Activated CD4-positive, alpha-beta T cell treated with anti-CD3 and anti-CD28 coated beads for 36 hours (primary cell): ENCODE measurements at regions of chr11 and their contacts with region 1.

Region 1: DNA sequence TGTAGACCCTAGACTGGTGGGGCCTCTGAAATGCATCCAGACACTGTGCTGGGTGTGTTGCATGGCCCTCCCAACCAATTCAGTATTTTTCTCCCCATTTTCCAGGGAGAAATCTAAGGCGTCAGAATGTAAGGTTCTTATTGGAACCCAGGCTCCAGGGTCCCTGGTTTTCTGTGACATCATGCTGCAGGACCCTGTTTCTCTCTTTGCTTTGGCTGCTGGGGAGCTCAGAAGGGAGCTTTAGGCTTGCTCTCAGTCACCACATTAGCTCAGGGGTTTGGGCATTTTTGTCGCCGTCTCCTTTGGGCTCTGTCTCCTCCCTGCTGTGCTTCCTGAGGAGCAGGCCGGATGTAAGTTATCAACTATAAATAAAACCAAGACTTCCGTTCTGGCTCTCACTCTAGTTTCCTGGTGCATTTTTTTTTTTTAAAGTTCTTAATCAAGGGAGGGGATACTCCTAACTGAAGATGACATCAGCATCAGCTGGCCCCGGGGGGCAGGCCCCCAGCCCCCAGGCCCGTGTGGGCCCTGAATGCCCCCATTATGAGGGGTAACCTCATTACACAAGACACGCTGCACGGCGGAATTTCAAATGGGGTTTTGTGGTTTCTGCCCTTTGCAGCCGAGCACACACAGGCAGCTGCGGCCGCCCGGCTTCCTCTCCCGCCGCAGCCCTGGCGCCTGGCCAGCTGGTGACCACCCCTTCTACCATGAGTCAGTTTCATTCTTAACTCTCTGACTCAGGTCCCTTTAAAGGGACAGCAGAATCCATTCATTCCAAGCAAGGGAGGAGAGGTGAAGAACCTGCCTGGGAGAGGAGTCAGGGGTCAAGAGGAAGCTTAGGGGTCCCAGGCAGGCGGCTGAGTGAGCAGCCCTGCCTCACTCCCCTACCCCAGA is 3.2 kb downstream of the MYEOV start:
- DNase-seq: peak; percentile 91
- ATAC-seq: peak; percentile 67
- H3K4me3 Mint-ChIP-seq: peak overlapping the region; percentile 32
- H3K27ac Mint-ChIP-seq: peak overlapping the region; percentile 37
- H3K4me1 Mint-ChIP-seq: peaks cover 50% of the 10 kb centered on the region
- H3K27me3 Mint-ChIP-seq: peaks cover 2% of the 10 kb centered on the region

Region 2: GRCh38 chr11:69101115-69101791 is 195.9 kb before region 1 on chr11:
- CTCF ChIA-PET with region 1: interaction called, 3 read pairs
- POLR2A ChIA-PET with region 1: no interaction called
- intact Hi-C with region 1: loop called (anchors 2 to 10 kb)
- DNase-seq: peak; percentile 85
- ATAC-seq: peak; percentile 93
- H3K4me3 Mint-ChIP-seq: no peak overlapping the region
- H3K27ac Mint-ChIP-seq: no peak overlapping the region
- H3K4me1 Mint-ChIP-seq: peaks cover 2% of the 10 kb centered on the region
- H3K27me3 Mint-ChIP-seq: no peaks in the 10 kb centered on the region

Region 3: GRCh38 chr11:69138265-69138664 is 158.9 kb before region 1 on chr11:
- CTCF ChIA-PET with region 1: no interaction called
- POLR2A ChIA-PET with region 1: no interaction called
- intact Hi-C with region 1: no loop called
- DNase-seq: no peak
- ATAC-seq: no peak
- H3K4me3 Mint-ChIP-seq: no peak overlapping the region
- H3K27ac Mint-ChIP-seq: no peak overlapping the region
- H3K4me1 Mint-ChIP-seq: peaks cover 18% of the 10 kb centered on the region
- H3K27me3 Mint-ChIP-seq: peaks cover 2% of the 10 kb centered on the region

Region 4: GRCh38 chr11:69166218-69167115 is 130.7 kb before region 1 on chr11:
- CTCF ChIA-PET with region 1: no interaction called
- POLR2A ChIA-PET with region 1: no interaction called
- intact Hi-C with region 1: loop called in 1 of 2 experiments (anchors 5 kb)
- DNase-seq: peak; percentile 77
- ATAC-seq: peak; percentile 99
- H3K4me3 Mint-ChIP-seq: no peak overlapping the region
- H3K27ac Mint-ChIP-seq: peak overlapping the region; percentile 77
- H3K4me1 Mint-ChIP-seq: peaks cover 18% of the 10 kb centered on the region
- H3K27me3 Mint-ChIP-seq: no peaks in the 10 kb centered on the region

Region 5: GRCh38 chr11:69337211-69337721 is 40.1 kb after region 1 on chr11:
- CTCF ChIA-PET with region 1: interaction called, 4 read pairs
- POLR2A ChIA-PET with region 1: no interaction called
- intact Hi-C with region 1: loop called (anchors 1 to 5 kb)
- DNase-seq: peak; percentile 63
- ATAC-seq: peak; percentile 87
- H3K4me3 Mint-ChIP-seq: peak overlapping the region; percentile 15
- H3K27ac Mint-ChIP-seq: peak overlapping the region; percentile 70
- H3K4me1 Mint-ChIP-seq: peaks cover 36% of the 10 kb centered on the region
- H3K27me3 Mint-ChIP-seq: no peaks in the 10 kb centered on the region

Region 6: GRCh38 chr11:69443138-69443967 is 146.2 kb after region 1 on chr11:
- CTCF ChIA-PET with region 1: interaction called, 3 read pairs
- POLR2A ChIA-PET with region 1: no interaction called
- intact Hi-C with region 1: loop called (anchors 1 kb)
- DNase-seq: peak; percentile 88
- ATAC-seq: peak; percentile 89
- H3K4me3 Mint-ChIP-seq: peak overlapping the region; percentile 48
- H3K27ac Mint-ChIP-seq: peak overlapping the region; percentile 14
- H3K4me1 Mint-ChIP-seq: peaks cover 16% of the 10 kb centered on the region
- H3K27me3 Mint-ChIP-seq: peaks cover 13% of the 10 kb centered on the region

Region 7: DNA sequence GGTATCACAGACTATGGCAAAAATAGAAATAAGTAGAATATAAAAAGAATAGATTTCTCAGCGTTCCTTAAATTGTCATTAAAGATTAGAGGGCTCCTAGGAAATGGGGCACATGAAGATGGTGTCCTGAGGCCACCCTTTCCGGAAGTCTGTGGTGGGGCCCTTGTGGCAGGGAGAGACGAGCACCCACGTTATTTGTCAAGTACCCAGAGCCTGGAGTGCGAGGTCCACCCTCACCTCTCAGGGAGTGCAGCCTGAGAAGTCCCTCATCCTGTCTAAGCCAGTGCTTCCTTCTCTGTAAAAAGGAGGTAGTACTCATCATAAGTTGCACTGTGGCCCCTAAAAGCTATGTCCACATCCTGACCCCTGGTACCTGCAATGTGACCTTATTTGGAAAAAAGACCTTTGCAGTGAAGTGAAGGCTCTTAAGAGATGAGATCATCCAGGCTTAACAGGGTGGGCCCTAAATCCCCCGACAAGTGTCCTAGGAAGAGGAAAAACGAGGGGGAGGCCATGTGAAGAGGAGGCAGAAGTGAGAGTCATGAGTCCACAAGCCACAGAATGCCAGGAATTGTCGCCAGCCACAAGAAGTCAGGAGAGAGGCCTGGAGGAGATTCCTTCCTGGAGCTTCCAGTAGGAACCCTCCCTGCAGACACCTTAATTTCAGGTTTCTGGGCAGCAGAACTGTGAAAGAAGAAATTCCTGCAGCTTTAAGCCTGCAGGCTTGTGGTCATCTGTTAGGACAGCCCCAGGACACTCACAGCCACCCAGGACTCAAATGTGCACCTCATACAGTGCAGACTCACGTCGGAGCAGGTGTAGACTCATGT is 267.0 kb after region 1 on chr11:
- CTCF ChIA-PET with region 1: no interaction called
- POLR2A ChIA-PET with region 1: no interaction called
- intact Hi-C with region 1: no loop called
- DNase-seq: no peak
- ATAC-seq: no peak
- H3K4me3 Mint-ChIP-seq: no peak overlapping the region
- H3K27ac Mint-ChIP-seq: no peak overlapping the region
- H3K4me1 Mint-ChIP-seq: peaks cover 5% of the 10 kb centered on the region
- H3K27me3 Mint-ChIP-seq: peaks cover 14% of the 10 kb centered on the region

Region 8: DNA sequence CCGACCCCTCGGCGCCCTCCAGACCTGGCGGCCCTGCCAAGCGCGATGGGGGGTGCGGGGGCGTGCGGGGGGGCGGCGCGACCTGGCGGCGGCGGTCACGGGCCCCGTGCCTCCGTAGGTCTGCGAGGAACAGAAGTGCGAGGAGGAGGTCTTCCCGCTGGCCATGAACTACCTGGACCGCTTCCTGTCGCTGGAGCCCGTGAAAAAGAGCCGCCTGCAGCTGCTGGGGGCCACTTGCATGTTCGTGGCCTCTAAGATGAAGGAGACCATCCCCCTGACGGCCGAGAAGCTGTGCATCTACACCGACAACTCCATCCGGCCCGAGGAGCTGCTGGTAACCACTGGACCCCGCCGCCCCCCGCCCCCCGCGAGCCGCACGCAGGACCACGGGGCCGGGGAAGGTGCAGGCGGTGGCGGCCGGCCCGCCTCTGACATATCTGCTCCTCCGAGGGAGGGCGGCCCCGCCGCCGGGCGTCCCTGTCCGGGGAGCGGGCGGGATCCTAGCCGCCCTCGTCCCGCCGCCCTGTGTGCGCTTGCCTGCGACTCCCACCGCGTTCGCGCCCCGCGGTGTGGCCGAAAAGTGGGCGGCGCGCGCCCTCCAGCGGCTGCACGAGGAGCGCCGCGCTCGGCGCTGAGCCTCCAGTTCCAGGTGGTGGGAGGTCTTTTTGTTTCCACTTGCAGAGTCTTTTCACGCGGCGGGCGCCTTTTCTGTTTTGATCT is 345.9 kb after region 1 on chr11:
- CTCF ChIA-PET with region 1: interaction called, 8 read pairs
- POLR2A ChIA-PET with region 1: no interaction called
- intact Hi-C with region 1: loop called (anchors 1 kb)
- DNase-seq: peak; percentile 86
- ATAC-seq: peak; percentile 80
- H3K4me3 Mint-ChIP-seq: peak overlapping the region; percentile 51
- H3K27ac Mint-ChIP-seq: no peak overlapping the region
- H3K4me1 Mint-ChIP-seq: peaks cover 18% of the 10 kb centered on the region
- H3K27me3 Mint-ChIP-seq: peaks cover 23% of the 10 kb centered on the region